Endothelial cell of umbilical vein (primary cell): ENCODE measurements at regions of chr3 and their contacts with region 1.

Region 1: DNA sequence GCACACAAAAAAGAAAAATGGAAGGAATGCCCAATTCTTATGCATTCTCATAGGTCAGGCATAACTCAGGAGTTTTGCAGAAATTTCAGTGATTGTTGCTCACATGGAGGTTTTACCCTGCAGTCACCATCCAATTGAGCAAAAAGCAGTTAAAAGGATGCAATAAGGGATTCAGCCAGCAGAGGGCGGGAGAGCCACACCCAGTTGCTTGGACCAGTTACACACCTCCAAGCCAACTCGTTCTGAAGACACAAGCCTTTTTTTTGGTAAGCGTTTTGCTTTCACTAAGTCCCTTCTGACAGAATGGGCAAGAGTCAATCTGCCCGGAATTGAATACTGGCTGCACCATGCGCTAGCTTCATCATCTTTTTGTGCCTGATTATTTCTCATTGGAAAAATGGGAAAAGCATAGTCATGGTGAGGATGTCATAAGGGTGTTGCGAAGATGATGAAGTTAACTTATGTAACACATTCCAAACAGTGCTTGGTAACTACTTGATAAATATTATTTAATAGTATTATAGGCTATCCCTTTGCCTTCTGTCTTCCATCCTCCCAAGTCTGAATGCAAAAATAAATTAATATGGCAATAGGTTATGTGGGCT is 154.4 kb upstream of the SGO1 start:
- DNase-seq: peak; percentile 84
- H3K4me3 ChIP-seq: no peak overlapping the region
- H3K27ac ChIP-seq: no peak overlapping the region
- H3K4me1 ChIP-seq: no peaks in the 10 kb centered on the region
- H3K27me3 ChIP-seq: no peaks in the 10 kb centered on the region
- CTCF ChIP-seq: peak; percentile 78 to 94
- POLR2A ChIP-seq: no peak

Region 2: GRCh38 chr3:20256144-20256543 is 84.3 kb before region 1 on chr3:
- CTCF ChIA-PET with region 1: no interaction called
- POLR2A ChIA-PET with region 1: no interaction called
- dilution Hi-C with region 1: no loop called
- intact Hi-C with region 1: loop called (anchors 1 kb)
- DNase-seq: peak; percentile 92
- H3K4me3 ChIP-seq: peak overlapping the region in 1 of 3 experiments; percentile 11
- H3K27ac ChIP-seq: peak overlapping the region; percentile 83
- H3K4me1 ChIP-seq: peaks cover 18% of the 10 kb centered on the region
- H3K27me3 ChIP-seq: no peaks in the 10 kb centered on the region
- CTCF ChIP-seq: no peak
- POLR2A ChIP-seq: no peak

Region 3: GRCh38 chr3:20668411-20668810 is 328.0 kb after region 1 on chr3:
- CTCF ChIA-PET with region 1: no interaction called
- POLR2A ChIA-PET with region 1: no interaction called
- dilution Hi-C with region 1: no loop called
- intact Hi-C with region 1: loop called (anchors 1 kb)
- DNase-seq: peak; percentile 45
- H3K4me3 ChIP-seq: no peak overlapping the region
- H3K27ac ChIP-seq: no peak overlapping the region
- H3K4me1 ChIP-seq: no peaks in the 10 kb centered on the region
- H3K27me3 ChIP-seq: no peaks in the 10 kb centered on the region
- CTCF ChIP-seq: peak in 1 of 2 donors; percentile 26
- POLR2A ChIP-seq: no peak

Region 4: DNA sequence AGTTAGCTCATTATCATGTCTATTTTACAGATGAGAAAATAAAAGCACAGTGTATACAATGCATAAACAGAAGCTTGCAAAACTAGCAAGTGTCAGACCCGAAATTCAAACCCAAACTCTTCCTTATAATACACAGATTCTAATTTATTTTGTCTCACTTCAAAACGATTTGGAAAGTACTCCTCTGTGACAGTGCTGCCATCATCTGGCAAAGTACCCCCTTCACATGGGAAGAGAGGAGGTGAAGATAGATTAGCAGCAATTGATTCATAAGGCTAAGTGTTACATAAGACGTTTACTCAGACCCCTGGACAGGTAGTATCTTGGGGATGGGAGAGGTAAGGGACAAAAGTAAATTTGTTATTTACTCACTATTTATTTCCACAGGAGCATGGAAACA is 589.6 kb after region 1 on chr3:
- CTCF ChIA-PET with region 1: no interaction called
- POLR2A ChIA-PET with region 1: no interaction called
- dilution Hi-C with region 1: no loop called
- intact Hi-C with region 1: loop called (anchors 1 kb)
- DNase-seq: peak; percentile 5
- H3K4me3 ChIP-seq: no peak overlapping the region
- H3K27ac ChIP-seq: no peak overlapping the region
- H3K4me1 ChIP-seq: no peaks in the 10 kb centered on the region
- H3K27me3 ChIP-seq: no peaks in the 10 kb centered on the region
- CTCF ChIP-seq: no peak
- POLR2A ChIP-seq: no peak

Region 5: GRCh38 chr3:21435871-21436270 is 1095.4 kb after region 1 on chr3:
- CTCF ChIA-PET with region 1: no interaction called
- POLR2A ChIA-PET with region 1: no interaction called
- dilution Hi-C with region 1: no loop called
- intact Hi-C with region 1: loop called (anchors 5 kb)
- DNase-seq: peak; percentile 88
- H3K4me3 ChIP-seq: no peak overlapping the region
- H3K27ac ChIP-seq: no peak overlapping the region
- H3K4me1 ChIP-seq: peaks cover 8% of the 10 kb centered on the region
- H3K27me3 ChIP-seq: no peaks in the 10 kb centered on the region
- CTCF ChIP-seq: no peak
- POLR2A ChIP-seq: no peak

Region 6: DNA sequence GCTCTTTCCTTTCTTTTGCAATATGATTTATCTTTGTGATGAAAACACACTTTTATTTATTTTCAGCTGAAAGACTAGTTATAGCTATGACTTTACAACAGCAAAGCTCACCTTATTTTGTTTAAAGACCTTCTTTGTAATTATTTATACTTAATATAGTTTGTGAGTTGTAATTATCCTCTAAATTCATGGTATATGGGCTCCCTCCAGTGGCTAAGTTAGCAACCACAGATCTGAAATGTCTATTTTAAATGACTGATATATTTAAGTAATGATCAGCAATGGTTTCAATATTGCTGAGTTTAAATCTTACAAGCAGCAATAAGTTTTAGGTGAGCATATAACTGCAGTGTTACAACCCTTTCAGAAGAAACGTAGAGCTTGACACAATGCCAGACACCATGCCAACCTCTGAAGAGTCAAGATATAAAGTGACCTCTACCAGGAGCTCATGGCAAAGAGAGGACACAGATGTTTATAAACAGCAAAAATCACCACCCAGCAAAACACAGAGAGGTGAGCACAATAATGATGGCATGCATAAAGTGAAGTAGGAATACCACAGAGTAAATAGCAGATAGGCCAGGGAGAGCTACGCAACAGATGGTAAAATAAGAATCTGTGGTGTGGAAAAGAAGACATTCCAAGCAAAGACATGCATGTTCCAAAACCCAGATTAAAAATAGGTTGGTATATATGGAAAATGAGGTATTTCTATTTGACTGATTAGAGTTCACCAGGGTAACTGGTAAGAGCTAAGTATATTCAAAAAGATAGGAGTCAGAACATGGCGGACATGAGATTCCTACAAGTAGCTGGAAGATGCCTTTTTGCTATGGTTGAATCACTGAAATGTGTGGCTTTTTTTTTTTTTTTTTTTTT is 1554.3 kb after region 1 on chr3:
- CTCF ChIA-PET with region 1: interaction called, 13 read pairs
- POLR2A ChIA-PET with region 1: no interaction called
- dilution Hi-C with region 1: no loop called
- intact Hi-C with region 1: loop called (anchors 2 kb)
- DNase-seq: peak; percentile 17
- H3K4me3 ChIP-seq: no peak overlapping the region
- H3K27ac ChIP-seq: no peak overlapping the region
- H3K4me1 ChIP-seq: no peaks in the 10 kb centered on the region
- H3K27me3 ChIP-seq: no peaks in the 10 kb centered on the region
- CTCF ChIP-seq: peak in 1 of 2 donors; percentile 10
- POLR2A ChIP-seq: no peak